ENCODE measurements at regions of chr5 and their contacts with region 1.

Region 1: DNA sequence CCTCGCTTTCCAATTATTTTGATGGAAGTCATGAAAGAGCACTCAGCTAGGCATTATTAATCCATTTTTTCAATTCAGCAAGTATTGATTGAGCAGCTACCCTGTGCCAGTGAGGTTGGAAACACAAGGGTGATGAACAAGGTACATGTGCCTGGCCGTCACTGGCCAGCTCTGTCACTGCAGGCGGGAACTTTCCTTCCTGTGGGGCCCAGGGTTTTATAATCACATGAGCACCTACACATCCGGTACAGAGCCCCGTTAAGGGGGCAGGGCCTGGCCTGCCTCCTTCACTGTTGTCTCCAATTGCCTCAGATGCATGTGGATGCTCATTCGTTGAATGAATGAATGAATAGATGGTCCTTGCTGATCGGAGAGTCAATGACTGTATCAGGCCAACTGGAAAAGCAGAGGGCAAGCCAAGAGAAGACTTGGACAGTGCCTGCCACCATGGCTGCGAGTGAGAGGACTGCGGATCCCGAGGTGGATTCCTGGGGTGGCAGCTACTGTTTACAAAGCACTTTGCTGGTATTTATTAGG is 55.9 kb upstream of the KCNMB1 start:
- DNase-seq: no peak
- H3K4me3 ChIP-seq: no peak overlapping the region
- CTCF ChIP-seq: no peak

Region 2: DNA sequence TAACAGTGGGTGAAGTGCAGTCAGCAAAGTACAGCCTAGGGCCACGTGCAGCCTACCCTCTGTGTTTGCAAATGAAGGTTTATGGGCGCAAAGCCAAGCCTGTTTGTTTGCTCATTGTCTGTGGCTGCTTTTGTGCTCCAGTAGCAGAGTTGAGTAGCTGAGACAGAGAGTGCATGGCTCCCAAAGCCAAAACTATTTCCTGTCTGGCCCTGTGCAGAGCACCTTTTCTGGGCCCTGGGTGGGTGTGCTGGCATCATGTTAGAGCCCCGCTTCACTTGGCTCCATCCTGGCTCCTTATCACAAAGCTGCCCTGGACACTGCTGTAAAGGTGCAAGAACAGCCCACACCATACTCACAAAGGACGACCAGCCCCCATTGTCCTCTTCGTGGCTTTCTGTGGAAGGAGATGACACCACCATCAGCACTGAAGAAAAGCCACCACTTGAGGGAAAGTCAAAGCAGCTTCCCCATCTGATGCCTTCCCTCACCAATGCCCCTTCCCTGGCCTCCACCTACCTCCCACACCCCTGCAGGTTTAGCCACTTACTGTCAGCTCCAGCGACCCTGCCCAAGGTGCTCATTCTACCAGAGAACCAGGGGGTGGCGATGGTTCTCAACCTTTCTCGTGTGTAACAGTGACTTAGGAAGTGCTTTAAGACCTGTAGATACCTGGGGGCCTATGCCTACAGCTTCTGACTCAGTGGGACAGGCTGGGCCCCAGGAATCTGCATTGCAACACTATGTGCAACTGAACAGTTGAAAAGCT is 170.9 kb before region 1 on chr5:
- CTCF ChIA-PET with region 1: no interaction called
- POLR2A ChIA-PET with region 1: no interaction called
- DNase-seq: no peak
- H3K4me3 ChIP-seq: no peak overlapping the region
- CTCF ChIP-seq: no peak

Region 3: DNA sequence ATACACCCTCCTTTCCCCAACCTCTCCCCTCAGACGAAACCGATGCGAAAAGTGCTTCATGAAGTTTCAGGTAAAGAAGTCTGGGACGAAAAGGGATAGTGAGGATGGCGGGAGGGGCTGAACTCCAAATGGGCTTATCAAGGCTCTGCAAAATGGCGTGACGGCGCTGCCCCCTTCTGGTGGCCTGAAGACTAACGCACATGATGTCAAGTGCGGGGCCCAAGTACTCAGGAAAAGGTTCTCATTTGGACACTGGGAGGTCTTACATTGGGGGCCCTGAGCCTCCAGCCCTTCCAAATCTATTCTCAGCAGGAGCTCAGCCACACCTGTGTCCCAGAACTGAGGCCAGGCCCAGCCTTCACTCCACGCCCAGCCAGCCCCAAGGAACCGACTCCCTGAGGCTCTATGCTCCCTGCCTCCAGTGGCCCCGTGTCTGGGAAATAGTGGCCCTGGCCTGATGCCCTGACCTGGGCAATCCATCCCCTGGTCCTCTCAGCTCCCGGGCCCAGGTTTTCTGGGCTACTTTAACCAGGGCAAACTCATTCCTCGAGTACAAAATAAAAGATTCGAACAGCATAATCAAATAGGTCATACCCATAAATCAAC is 178.6 kb after region 1 on chr5:
- CTCF ChIA-PET with region 1: interaction called, 12 read pairs
- POLR2A ChIA-PET with region 1: no interaction called
- DNase-seq: peak; percentile 5
- H3K4me3 ChIP-seq: no peak overlapping the region
- CTCF ChIP-seq: peak; percentile 80